Natural killer cell (primary cell): ENCODE measurements at regions of chr2 and their contacts with region 1.

Region 1: DNA sequence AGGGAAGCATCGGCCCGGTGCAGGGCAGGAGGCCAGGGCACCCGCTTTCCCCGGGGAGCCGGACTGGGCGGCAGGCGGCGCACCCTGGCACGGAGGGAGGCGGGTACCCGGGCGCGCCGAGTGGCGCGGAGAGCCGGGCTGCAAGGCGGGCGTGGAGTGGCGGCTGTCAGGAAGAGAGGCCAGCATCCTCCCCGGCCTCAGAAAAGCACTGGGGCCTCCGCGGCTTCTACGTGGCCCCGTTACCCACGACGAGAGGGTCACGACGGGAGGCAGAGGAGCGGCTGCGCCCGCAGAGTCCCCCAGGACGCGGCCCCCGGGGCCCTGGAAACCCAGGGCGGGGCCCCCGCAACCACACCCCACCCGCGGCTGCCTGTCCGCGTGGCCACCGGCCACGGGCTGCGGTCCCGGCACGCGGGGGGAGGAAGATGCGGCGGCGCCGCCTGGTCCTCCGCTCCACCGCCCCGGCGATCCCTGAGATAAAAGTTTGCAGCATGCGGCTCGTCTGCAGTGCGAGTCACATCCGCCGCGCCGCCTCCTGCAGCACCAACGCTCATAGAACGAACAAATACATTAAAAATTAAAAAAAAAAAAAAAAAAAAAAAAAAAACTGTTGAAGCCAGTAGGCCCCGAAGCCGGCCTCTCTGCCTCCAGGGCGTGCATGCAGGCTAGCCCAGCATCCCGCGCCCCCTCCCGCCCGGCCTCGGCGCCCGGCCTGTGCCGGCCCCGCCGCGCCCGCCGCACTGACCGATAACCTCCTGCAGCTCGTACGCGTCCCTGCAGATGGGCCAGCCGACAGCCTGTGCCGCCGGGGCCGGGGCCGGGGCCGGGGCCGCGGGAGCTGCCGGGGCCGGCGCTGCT is 683 bp downstream of the STK39 start:
- DNase-seq: peak; percentile 80 to 91
- ATAC-seq: peak; percentile 58 to 77 (median 64)
- H3K4me3 ChIP-seq: peak overlapping the region; percentile 56
- H3K4me3 Mint-ChIP-seq: peak overlapping the region; percentile 95
- H3K27ac ChIP-seq: peak overlapping the region; percentile 66
- H3K27ac Mint-ChIP-seq: peak overlapping the region; percentile 92 to 93
- H3K4me1 ChIP-seq: peaks cover 28% of the 10 kb centered on the region
- H3K4me1 Mint-ChIP-seq: peaks cover 44 to 47% of the 10 kb centered on the region in 2 donors
- H3K27me3 ChIP-seq: no peaks in the 10 kb centered on the region
- H3K27me3 Mint-ChIP-seq: no peaks in the 10 kb centered on the region
- CTCF ChIP-seq: peak; percentile 13

Region 2: DNA sequence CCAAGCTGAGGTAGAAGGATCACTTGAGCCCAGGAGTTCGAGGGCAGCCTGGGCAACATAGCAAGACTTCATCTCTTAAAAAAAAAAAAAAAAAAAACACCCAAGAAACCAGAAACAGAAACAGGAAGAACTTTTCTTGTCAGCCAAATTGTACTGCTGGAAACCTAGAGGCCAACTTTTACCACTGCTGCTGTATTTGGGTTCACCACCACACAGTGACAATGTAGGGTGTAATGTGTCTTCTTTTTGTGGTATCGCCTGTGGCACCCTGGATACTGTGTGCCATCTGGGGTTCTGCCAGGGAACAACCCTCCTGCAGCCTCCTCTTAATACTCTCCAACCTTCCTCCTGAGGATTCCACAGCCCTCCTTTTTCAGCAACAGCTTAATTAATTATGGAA is 72.0 kb before region 1 on chr2:
- intact Hi-C with region 1: loop called (anchors 2 kb)
- DNase-seq: peak; percentile 35 to 65
- ATAC-seq: peak; percentile 88 to 97 (median 90)
- H3K4me3 ChIP-seq: peak overlapping the region; percentile 10
- H3K4me3 Mint-ChIP-seq: peak overlapping the region; percentile 78
- H3K27ac ChIP-seq: peak overlapping the region; percentile 58
- H3K27ac Mint-ChIP-seq: peak overlapping the region; percentile 85 to 96
- H3K4me1 ChIP-seq: peaks cover 26% of the 10 kb centered on the region
- H3K4me1 Mint-ChIP-seq: peaks cover 70 to 75% of the 10 kb centered on the region in 2 donors
- H3K27me3 ChIP-seq: no peaks in the 10 kb centered on the region
- H3K27me3 Mint-ChIP-seq: no peaks in the 10 kb centered on the region
- CTCF ChIP-seq: no peak

Region 3: DNA sequence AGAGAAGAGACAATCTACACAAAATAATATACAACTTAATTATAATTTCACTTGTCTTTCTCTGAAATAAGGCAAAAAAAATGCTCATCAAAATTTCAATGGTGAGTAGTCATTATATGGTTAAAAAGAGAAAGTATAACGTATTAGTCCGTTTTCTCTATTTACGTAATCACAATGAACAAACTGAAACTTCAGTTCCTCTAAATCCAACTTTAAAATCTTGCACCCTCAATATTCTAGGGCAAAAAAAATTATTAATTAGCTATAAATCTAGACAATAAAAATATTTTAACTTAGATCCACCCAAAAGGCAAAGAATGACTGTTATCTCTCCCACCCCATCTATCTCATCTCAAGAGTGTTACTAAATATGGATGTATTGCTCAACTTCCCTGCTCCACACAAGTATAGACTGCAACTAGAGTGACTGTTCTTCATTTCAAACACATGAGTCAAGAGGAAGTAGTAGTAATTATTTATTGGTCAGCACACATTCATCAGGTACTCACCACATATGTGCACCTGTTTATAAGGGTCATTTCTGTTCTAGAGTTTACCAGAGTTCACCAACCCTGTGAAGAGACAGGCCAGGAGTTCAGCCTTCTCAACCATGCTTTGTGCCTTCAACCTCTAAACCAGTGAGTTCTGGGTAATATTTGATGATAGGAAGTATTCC is 35.7 kb before region 1 on chr2:
- intact Hi-C with region 1: loop called (anchors 5 kb)
- DNase-seq: peak in 1 of 2 donors; percentile 23
- ATAC-seq: peak; percentile 80 to 86 (median 83)
- H3K4me3 ChIP-seq: no peak overlapping the region
- H3K4me3 Mint-ChIP-seq: peak overlapping the region; percentile 55
- H3K27ac ChIP-seq: no peak overlapping the region
- H3K27ac Mint-ChIP-seq: peak overlapping the region; percentile 27 to 84
- H3K4me1 ChIP-seq: peaks cover 16% of the 10 kb centered on the region
- H3K4me1 Mint-ChIP-seq: peaks cover 86 to 90% of the 10 kb centered on the region in 2 donors
- H3K27me3 ChIP-seq: no peaks in the 10 kb centered on the region
- H3K27me3 Mint-ChIP-seq: no peaks in the 10 kb centered on the region
- CTCF ChIP-seq: no peak

Region 4: DNA sequence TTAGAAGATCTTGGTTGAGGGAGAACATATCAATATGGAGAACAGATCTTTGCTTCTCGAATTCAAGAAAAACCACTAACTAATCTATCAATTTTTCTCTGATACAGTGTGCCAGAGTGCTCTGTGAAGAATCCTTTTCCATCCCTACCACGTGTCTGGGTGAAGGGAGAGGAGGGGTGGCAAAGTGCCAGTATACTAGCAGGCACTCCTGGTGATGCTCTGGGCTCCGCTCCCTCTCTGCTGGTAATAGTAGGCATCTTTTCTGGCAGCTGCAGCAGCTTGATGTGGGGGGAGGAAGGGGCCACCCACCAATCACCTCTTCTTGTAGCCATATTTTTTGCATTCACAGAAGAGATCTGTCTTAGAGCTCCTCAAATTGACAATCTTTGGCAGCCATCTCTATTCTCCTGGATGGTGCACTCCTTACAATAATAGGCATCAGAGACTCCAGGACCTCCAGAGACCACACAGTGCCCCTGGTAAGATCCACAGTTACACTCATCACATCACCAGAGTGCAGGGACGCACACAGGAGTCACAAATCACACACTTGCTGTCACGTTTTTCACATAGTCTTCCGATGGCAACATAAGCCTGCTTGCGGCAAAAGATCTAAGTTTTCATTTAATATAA is 15.0 kb before region 1 on chr2:
- intact Hi-C with region 1: no loop called
- DNase-seq: no peak
- ATAC-seq: no peak
- H3K4me3 ChIP-seq: no peak overlapping the region
- H3K4me3 Mint-ChIP-seq: no peak overlapping the region
- H3K27ac ChIP-seq: no peak overlapping the region
- H3K27ac Mint-ChIP-seq: peak overlapping the region; percentile 37 to 48
- H3K4me1 ChIP-seq: peaks cover 10% of the 10 kb centered on the region
- H3K4me1 Mint-ChIP-seq: peaks cover 43 to 52% of the 10 kb centered on the region in 2 donors
- H3K27me3 ChIP-seq: no peaks in the 10 kb centered on the region
- H3K27me3 Mint-ChIP-seq: no peaks in the 10 kb centered on the region
- CTCF ChIP-seq: no peak

Region 5: GRCh38 chr2:168500516-168500915 is 253.8 kb after region 1 on chr2:
- intact Hi-C with region 1: no loop called
- DNase-seq: no peak
- ATAC-seq: no peak
- H3K4me3 ChIP-seq: no peak overlapping the region
- H3K4me3 Mint-ChIP-seq: no peak overlapping the region
- H3K27ac ChIP-seq: no peak overlapping the region
- H3K27ac Mint-ChIP-seq: no peak overlapping the region
- H3K4me1 ChIP-seq: no peaks in the 10 kb centered on the region
- H3K4me1 Mint-ChIP-seq: peaks cover 34 to 36% of the 10 kb centered on the region in 2 donors
- H3K27me3 ChIP-seq: no peaks in the 10 kb centered on the region
- H3K27me3 Mint-ChIP-seq: no peaks in the 10 kb centered on the region
- CTCF ChIP-seq: no peak